ENCODE measurements at regions of chr16 and their contacts with region 1.

Region 1: GRCh38 chr16:1492923-1493745 is at the start of gene TELO2:
- DNase-seq: peak; percentile 75 to 93 (median 85)
- ATAC-seq: peak; percentile 94
- H3K4me3 ChIP-seq: peak within 1 kb of the TSS; percentile 68 to 87
- H3K4me3 Mint-ChIP-seq: peak within 1 kb of the TSS; percentile 95
- H3K27ac ChIP-seq: peak within 1 kb of the TSS; percentile 93 to 96
- H3K27ac Mint-ChIP-seq: peak within 1 kb of the TSS; percentile 100
- H3K4me1 ChIP-seq: peaks cover 16% of the 10 kb centered on the region
- H3K4me1 Mint-ChIP-seq: peaks cover 11% of the 10 kb centered on the region
- H3K27me3 ChIP-seq: no peaks in the 10 kb centered on the region
- H3K27me3 Mint-ChIP-seq: no peaks in the 10 kb centered on the region
- CTCF ChIP-seq: no peak
- total RNA-seq, gene TELO2: 23.0 to 23.6 TPM

Region 2: GRCh38 chr16:1378804-1379303 is 114.3 kb before region 1 on chr16:
- CTCF ChIA-PET with region 1: no interaction called
- POLR2A ChIA-PET with region 1: no interaction called
- intact Hi-C with region 1: loop called in 1 of 2 experiments (anchors 10 kb)
- DNase-seq: peak in 6 of 9 experiments; percentile 19 to 85 (median 56)
- ATAC-seq: peak; percentile 59
- H3K4me3 ChIP-seq: no peak overlapping the region
- H3K4me3 Mint-ChIP-seq: peak overlapping the region; percentile 58
- H3K27ac ChIP-seq: no peak overlapping the region
- H3K27ac Mint-ChIP-seq: peak overlapping the region; percentile 64
- H3K4me1 ChIP-seq: peaks cover 17% of the 10 kb centered on the region
- H3K4me1 Mint-ChIP-seq: peaks cover 14% of the 10 kb centered on the region
- H3K27me3 ChIP-seq: no peaks in the 10 kb centered on the region
- H3K27me3 Mint-ChIP-seq: no peaks in the 10 kb centered on the region
- CTCF ChIP-seq: no peak

Region 3: DNA sequence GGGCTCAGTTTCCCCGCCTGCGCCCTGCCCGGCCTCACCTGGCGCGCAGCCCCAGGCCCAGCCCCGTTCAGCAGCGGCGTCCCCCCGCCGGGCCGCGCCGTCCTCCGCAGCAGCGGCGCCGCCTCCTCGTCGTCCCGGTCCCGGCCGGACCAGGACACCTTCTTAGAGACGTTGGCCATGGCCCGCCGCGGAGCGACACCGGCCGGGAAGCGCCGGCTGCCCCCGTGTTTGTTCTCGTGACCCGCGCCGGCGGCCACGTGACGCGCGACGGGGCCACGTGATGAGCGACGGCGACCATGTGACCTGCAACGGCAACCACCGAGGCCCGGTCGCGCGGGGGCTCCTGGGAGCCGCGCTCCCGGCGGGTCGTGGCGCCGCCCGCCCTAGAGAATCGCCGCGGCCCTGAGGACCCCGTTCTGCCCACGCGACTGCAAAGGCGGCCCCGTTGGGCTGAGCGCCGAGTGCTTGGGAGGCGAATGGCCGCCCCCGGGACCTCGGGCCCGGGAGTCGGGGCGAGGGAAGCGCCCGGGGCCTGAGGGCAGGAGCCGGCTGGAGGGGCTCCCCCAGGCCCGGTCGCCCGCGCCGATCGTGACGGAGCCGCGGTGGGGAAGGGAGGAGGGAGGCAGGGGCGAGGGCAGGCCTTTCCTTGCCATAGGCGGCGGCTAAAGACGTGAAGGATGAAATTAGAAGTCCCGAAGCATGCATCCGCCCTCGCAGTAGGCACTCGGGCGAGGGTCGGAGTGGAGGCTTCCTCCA is 18.2 kb before region 1 on chr16 and contains the start of gene CLCN7:
- CTCF ChIA-PET with region 1: interaction called, 3 read pairs
- POLR2A ChIA-PET with region 1: interaction called, 4 read pairs
- intact Hi-C with region 1: loop called (anchors 1 kb)
- DNase-seq: peak; percentile 58 to 93 (median 87)
- ATAC-seq: peak; percentile 82
- H3K4me3 ChIP-seq: peak within 1 kb of the TSS; percentile 60 to 84
- H3K4me3 Mint-ChIP-seq: peak within 1 kb of the TSS; percentile 83
- H3K27ac ChIP-seq: peak within 1 kb of the TSS; percentile 75 to 81
- H3K27ac Mint-ChIP-seq: peak within 1 kb of the TSS; percentile 90
- H3K4me1 ChIP-seq: peaks cover 31% of the 10 kb centered on the region
- H3K4me1 Mint-ChIP-seq: peaks cover 40% of the 10 kb centered on the region
- H3K27me3 ChIP-seq: no peaks in the 10 kb centered on the region
- H3K27me3 Mint-ChIP-seq: no peaks in the 10 kb centered on the region
- CTCF ChIP-seq: no peak
- total RNA-seq, gene CLCN7: 85.7 to 90.0 TPM

Region 4: GRCh38 chr16:1533443-1533951 is 40.4 kb after region 1 on chr16 and contains the start of gene TMEM204:
- CTCF ChIA-PET with region 1: no interaction called
- POLR2A ChIA-PET with region 1: interaction called, 7 read pairs
- intact Hi-C with region 1: loop called (anchors 2 kb)
- DNase-seq: peak in 8 of 9 experiments; percentile 34 to 83 (median 53)
- ATAC-seq: peak; percentile 35
- H3K4me3 ChIP-seq: peak within 1 kb of the TSS; percentile 78 to 95
- H3K4me3 Mint-ChIP-seq: peak within 1 kb of the TSS; percentile 88
- H3K27ac ChIP-seq: peak within 1 kb of the TSS; percentile 69 to 75
- H3K27ac Mint-ChIP-seq: peak within 1 kb of the TSS; percentile 83
- H3K4me1 ChIP-seq: peaks cover 50% of the 10 kb centered on the region
- H3K4me1 Mint-ChIP-seq: peaks cover 51% of the 10 kb centered on the region
- H3K27me3 ChIP-seq: no peaks in the 10 kb centered on the region
- H3K27me3 Mint-ChIP-seq: no peaks in the 10 kb centered on the region
- CTCF ChIP-seq: no peak
- total RNA-seq, gene TMEM204: 6.8 to 7.3 TPM